ENCODE measurements at regions of chr7 and their contacts with region 1.

Region 1: GRCh38 chr7:107879400-107880035 is 11.5 kb upstream of the DLD start:
- DNase-seq: peak; percentile 69
- ATAC-seq: peak; percentile 92
- H3K4me3 ChIP-seq: no peak overlapping the region
- H3K27ac ChIP-seq: no peak overlapping the region
- H3K4me1 ChIP-seq: no peaks in the 10 kb centered on the region
- H3K27me3 ChIP-seq: peaks cover 13% of the 10 kb centered on the region
- CTCF ChIP-seq: peak; percentile 84
- POLR2A ChIP-seq: no peak
- RAD21 ChIP-seq: peak; percentile 75

Region 2: GRCh38 chr7:107201795-107202450 is 677.6 kb before region 1 on chr7:
- CTCF ChIA-PET with region 1: no interaction called
- POLR2A ChIA-PET with region 1: no interaction called
- dilution Hi-C with region 1: no loop called
- in situ Hi-C with region 1: no loop called
- intact Hi-C with region 1: loop called (anchors 10 kb)
- DNase-seq: peak; percentile 18
- ATAC-seq: peak; percentile 37; the same call in 1 of the 2 replicates
- H3K4me3 ChIP-seq: no peak overlapping the region
- H3K27ac ChIP-seq: no peak overlapping the region
- H3K4me1 ChIP-seq: no peaks in the 10 kb centered on the region
- H3K27me3 ChIP-seq: no peaks in the 10 kb centered on the region
- CTCF ChIP-seq: peak; percentile 35; the same call in 1 of the 2 replicates
- POLR2A ChIP-seq: no peak
- RAD21 ChIP-seq: peak; percentile 52

Region 3: DNA sequence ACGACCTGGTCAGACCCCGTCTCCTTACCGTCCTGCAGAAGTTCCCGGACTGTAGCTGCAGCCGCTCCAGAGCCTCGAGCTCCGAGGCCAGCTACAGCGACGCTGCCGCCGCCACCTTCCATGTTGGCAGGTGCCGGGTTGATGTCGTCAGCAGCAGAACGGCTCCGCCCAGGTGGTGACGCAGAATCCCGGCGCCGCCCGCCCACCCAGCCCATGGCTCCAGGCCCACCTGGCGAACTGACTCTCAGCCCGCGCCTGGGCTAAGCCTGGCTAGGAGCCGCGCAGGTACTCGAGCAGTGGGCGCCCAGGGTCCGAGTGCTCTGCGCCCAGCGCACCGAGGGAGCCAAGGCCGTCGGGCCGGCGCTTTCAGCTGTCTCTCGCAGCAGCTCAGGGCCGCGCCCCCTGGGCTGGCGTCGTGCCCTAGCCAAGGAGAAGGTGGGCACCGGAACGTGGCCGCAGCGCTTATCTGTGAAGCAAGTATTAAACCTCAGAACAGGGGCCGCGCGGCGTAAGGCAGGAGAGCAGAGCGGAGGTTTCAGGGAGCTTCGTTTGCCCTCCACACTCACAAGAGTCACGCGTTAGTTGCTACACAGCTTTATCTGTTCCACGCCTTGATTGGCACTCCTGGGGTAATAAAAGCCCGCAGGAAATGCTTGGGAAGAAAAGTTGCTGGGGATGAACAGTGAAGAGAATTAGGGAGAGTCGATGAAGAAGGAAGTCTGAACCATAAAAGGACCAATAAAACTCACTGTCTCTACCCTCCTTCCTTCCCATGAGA is 315.6 kb before region 1 on chr7 and contains the starts of genes COG5 and DUS4L:
- CTCF ChIA-PET with region 1: no interaction called
- POLR2A ChIA-PET with region 1: no interaction called
- dilution Hi-C with region 1: no loop called
- in situ Hi-C with region 1: no loop called
- intact Hi-C with region 1: no loop called
- DNase-seq: peak; percentile 79
- ATAC-seq: peak; percentile 85
- H3K4me3 ChIP-seq: peak within 1 kb of the TSS; percentile 90
- H3K27ac ChIP-seq: peak within 1 kb of the TSS; percentile 88
- H3K4me1 ChIP-seq: peaks cover 5% of the 10 kb centered on the region; the same call in 1 of the 2 replicates
- H3K27me3 ChIP-seq: no peaks in the 10 kb centered on the region
- CTCF ChIP-seq: no peak
- POLR2A ChIP-seq: peak; percentile 61; the same call in 1 of the 2 replicates
- RAD21 ChIP-seq: no peak
- total RNA-seq, gene COG5: 27.4 and 35.8 TPM in 2 replicates
- total RNA-seq, gene DUS4L: 6.6 and 8.6 TPM in 2 replicates

Region 4: DNA sequence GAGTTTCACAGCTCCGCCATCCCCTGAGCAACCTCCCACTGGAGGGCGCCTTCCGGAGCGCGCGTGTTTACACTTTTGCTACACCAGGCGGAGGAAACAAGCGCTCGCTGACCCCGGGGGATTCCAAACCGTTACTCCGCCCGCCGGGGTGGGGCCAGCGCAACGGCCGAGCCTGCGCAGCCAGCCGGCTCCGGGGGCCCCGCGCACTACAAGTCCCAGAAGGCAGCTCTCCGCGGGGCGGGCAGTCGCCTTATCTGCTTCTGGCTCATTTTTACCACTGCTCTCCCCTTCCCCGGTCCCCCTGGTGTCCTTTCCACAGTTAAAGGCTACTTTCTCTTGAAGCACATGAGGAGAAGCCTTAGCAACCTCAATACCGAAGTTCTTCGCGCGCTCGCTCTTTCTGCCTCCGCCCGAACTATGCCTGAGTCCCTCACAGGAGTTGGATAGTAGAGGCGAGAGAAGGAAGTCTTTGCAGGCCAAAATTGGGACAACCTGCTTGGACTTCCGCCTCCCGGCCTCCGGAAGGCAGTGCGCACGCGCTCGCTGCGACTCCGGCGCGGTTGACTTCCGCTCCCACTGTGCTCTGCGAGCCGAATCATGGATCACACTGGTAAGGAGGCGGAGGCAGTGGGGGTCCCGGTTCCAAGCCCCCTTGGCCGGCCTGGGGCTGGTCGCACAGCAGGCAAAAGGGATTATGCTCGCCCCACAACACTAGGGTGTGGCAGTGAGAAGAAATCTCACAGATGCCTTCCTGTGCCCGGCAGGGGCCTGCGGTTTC is 135.8 kb before region 1 on chr7 and contains the start of gene CBLL1:
- CTCF ChIA-PET with region 1: interaction called, 13 read pairs
- POLR2A ChIA-PET with region 1: no interaction called
- dilution Hi-C with region 1: no loop called
- in situ Hi-C with region 1: loop called (anchors 10 kb)
- intact Hi-C with region 1: loop called (anchors 1 kb)
- DNase-seq: peak; percentile 94
- ATAC-seq: peak; percentile 98
- H3K4me3 ChIP-seq: peak within 1 kb of the TSS; percentile 87
- H3K27ac ChIP-seq: peak within 1 kb of the TSS; percentile 93
- H3K4me1 ChIP-seq: peaks cover 8% of the 10 kb centered on the region
- H3K27me3 ChIP-seq: no peaks in the 10 kb centered on the region
- CTCF ChIP-seq: peak; percentile 85
- POLR2A ChIP-seq: peak; percentile 79
- RAD21 ChIP-seq: peak; percentile 59
- total RNA-seq, gene CBLL1: 15.6 and 20.3 TPM in 2 replicates

Region 5: GRCh38 chr7:107890962-107891635 is 11.6 kb after region 1 on chr7 and contains the start of gene DLD:
- CTCF ChIA-PET with region 1: interaction called, 15 read pairs
- POLR2A ChIA-PET with region 1: interaction called, 3 read pairs
- dilution Hi-C with region 1: no loop called
- in situ Hi-C with region 1: no loop called
- intact Hi-C with region 1: no loop called
- DNase-seq: peak; percentile 91
- ATAC-seq: peak; percentile 99
- H3K4me3 ChIP-seq: peak within 1 kb of the TSS; percentile 72
- H3K27ac ChIP-seq: peak within 1 kb of the TSS; percentile 95
- H3K4me1 ChIP-seq: peaks cover 5% of the 10 kb centered on the region
- H3K27me3 ChIP-seq: 0 out of 2 replicates have a peak, but pooled peaks cover 1% of the 10 kb centered on the region
- CTCF ChIP-seq: no peak
- POLR2A ChIP-seq: peak; percentile 81
- RAD21 ChIP-seq: no peak
- total RNA-seq, gene DLD: 120 and 361 TPM in 2 replicates

Region 6: GRCh38 chr7:108094933-108095710 is 215.6 kb after region 1 on chr7:
- CTCF ChIA-PET with region 1: no interaction called
- POLR2A ChIA-PET with region 1: no interaction called
- dilution Hi-C with region 1: no loop called
- in situ Hi-C with region 1: no loop called
- intact Hi-C with region 1: no loop called
- DNase-seq: peak; percentile 91
- ATAC-seq: peak; percentile 87
- H3K4me3 ChIP-seq: no peak overlapping the region
- H3K27ac ChIP-seq: peak overlapping the region; percentile 85; the same call in 1 of the 2 replicates
- H3K4me1 ChIP-seq: peaks cover 21% of the 10 kb centered on the region
- H3K27me3 ChIP-seq: no peaks in the 10 kb centered on the region
- CTCF ChIP-seq: no peak
- POLR2A ChIP-seq: no peak
- RAD21 ChIP-seq: no peak